CD14-positive monocyte (primary cell): ENCODE measurements at regions of chr9 and their contacts with region 1.

Region 1: DNA sequence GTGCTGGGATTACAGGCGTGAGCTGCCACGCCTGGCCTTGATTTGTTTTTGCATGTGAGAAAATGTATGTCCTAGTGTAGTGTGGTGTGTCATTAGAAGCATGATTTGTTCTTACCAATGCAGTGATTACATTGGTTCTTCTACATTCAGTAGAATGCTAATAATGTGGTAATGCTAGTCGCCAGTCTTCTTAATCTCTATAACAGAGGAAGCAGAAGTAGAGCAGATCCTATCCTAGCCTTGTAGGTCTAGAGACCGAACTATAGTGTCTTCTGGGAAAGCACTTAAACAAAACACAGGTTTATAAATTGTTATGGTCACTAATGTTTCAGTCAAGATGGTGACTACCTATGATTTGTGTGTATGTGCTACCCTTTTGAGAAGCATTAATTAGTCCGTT is 197.5 kb upstream of the DMRT1 start:
- DNase-seq: no peak
- H3K4me3 ChIP-seq: no peak overlapping the region
- H3K4me3 Mint-ChIP-seq: no peak overlapping the region
- H3K27ac ChIP-seq: no peak overlapping the region
- H3K27ac Mint-ChIP-seq: peak overlapping the region in 2 of 7 donors; percentile 16 to 45
- H3K4me1 ChIP-seq: peaks cover 9 to 10% of the 10 kb centered on the region in 2 donors
- H3K4me1 Mint-ChIP-seq: peaks cover 17% of the 10 kb centered on the region
- H3K27me3 ChIP-seq: no peaks in the 10 kb centered on the region
- H3K27me3 Mint-ChIP-seq: peaks cover 0 to 5% (median 0%) of the 10 kb centered on the region in 3 donors
- CTCF ChIP-seq: no peak

Region 2: GRCh38 chr9:655875-656274 is 11.9 kb after region 1 on chr9:
- intact Hi-C with region 1: no loop called
- DNase-seq: no peak
- H3K4me3 ChIP-seq: no peak overlapping the region
- H3K4me3 Mint-ChIP-seq: no peak overlapping the region
- H3K27ac ChIP-seq: no peak overlapping the region
- H3K27ac Mint-ChIP-seq: peak overlapping the region in 1 of 7 donors; percentile 66
- H3K4me1 ChIP-seq: peaks cover 30 to 46% of the 10 kb centered on the region in 2 donors
- H3K4me1 Mint-ChIP-seq: peaks cover 59% of the 10 kb centered on the region
- H3K27me3 ChIP-seq: no peaks in the 10 kb centered on the region
- H3K27me3 Mint-ChIP-seq: peaks cover 0 to 6% (median 2%) of the 10 kb centered on the region in 3 donors
- CTCF ChIP-seq: no peak

Region 3: DNA sequence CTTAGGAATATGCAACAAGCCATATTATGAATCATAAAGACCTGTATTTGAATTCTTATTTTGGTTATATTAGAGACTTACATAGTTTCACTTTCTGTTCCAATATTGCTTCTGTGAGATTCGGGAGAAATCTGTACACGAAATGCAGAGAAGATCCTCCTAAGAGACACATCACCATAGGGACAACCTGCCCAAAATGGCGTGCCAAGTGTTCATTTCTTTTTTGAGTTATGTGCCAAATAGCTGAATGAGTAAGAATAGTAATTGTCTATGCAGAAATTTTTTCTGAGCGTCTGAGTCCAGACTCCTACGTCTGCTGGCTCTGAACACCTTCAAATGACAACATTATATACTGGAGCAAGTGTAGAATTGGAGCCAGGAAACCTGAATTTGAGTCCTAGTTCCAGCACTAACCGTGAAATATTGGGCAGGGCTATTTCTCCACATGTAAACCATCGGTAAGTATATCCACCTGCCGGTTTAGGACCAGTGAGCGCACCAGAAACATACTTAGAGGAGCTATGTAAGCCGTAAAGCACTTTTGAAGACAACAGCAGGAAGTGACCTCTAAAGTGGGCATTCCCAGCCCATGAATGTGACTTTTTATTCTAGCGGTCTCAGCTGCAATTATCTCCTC is 33.6 kb after region 1 on chr9:
- intact Hi-C with region 1: loop called in 1 of 2 experiments (anchors 2 kb)
- DNase-seq: peak in 1 of 3 donors; percentile 18
- H3K4me3 ChIP-seq: peak overlapping the region; percentile 18 to 77 (median 63)
- H3K4me3 Mint-ChIP-seq: peak overlapping the region; percentile 72 to 89
- H3K27ac ChIP-seq: no peak overlapping the region
- H3K27ac Mint-ChIP-seq: peak overlapping the region in 1 of 7 donors; percentile 27
- H3K4me1 ChIP-seq: no peaks in the 10 kb centered on the region
- H3K4me1 Mint-ChIP-seq: peaks cover 11% of the 10 kb centered on the region
- H3K27me3 ChIP-seq: no peaks in the 10 kb centered on the region
- H3K27me3 Mint-ChIP-seq: peaks cover 0 to 3% (median 2%) of the 10 kb centered on the region in 3 donors
- CTCF ChIP-seq: no peak